ENCODE measurements at regions of chr5 and their contacts with region 1.

Region 1: DNA sequence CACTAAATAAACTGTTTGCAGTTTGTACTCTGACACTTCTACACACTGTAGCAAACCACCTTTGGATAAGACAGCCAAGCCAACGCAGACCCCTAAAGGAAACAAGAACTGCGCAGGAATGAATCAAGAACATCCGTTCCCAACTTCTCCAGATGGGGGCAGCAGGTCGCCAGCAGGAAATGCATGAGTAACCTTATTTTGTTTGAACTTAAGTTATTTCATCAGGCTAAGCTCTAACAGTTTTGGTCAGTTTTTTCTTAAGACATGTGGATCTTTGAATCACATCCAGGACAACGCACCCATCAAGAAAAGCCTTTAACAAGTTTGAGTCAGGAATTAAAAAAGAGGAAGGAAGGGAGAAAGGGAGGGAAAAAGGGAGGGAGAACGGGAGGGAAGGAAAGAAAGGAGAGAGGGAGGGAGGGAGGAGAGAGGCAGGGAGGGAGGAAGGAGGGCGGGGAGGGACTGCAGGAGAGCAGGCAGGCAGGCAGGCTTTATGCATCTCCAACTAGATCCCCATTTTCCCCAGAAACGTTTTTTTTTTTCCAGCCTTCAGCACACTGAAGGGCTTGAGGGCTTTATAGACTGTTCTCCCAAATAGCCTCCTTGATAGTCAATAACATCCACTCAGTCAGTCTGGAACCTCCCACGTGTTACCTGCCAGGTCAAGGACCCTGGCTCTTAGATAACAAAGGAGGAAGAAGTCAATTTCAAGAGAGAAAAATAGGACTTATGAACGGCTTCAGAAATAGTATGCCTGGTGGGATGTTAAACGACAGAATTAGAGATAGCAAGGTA is 22.2 kb downstream of the BHMT start:
- DNase-seq: peak; percentile 24
- ATAC-seq: peak; percentile 89
- H3K4me3 ChIP-seq: no peak overlapping the region
- H3K27ac ChIP-seq: no peak overlapping the region
- H3K4me1 ChIP-seq: peaks cover 17% of the 10 kb centered on the region
- H3K27me3 ChIP-seq: no peaks in the 10 kb centered on the region
- CTCF ChIP-seq: peak; percentile 70 to 83 (median 74)
- EP300 ChIP-seq: no peak
- POLR2A ChIP-seq: no peak
- RAD21 ChIP-seq: peak; percentile 93

Region 2: GRCh38 chr5:78467752-78468357 is 666.0 kb before region 1 on chr5:
- CTCF ChIA-PET with region 1: interaction called, 10 read pairs
- POLR2A ChIA-PET with region 1: no interaction called
- RAD21 ChIA-PET with region 1: interaction called, 7 read pairs
- SMC1A ChIA-PET with region 1: interaction called, 5 read pairs
- in situ Hi-C with region 1: no loop called
- intact Hi-C with region 1: loop called (anchors 10 kb)
- DNase-seq: peak; percentile 3
- ATAC-seq: peak; percentile 91
- H3K4me3 ChIP-seq: no peak overlapping the region
- H3K27ac ChIP-seq: no peak overlapping the region
- H3K4me1 ChIP-seq: no peaks in the 10 kb centered on the region
- H3K27me3 ChIP-seq: no peaks in the 10 kb centered on the region
- CTCF ChIP-seq: peak; percentile 55 to 76 (median 64)
- EP300 ChIP-seq: no peak
- POLR2A ChIP-seq: no peak
- RAD21 ChIP-seq: peak; percentile 76

Region 3: GRCh38 chr5:78964887-78965286 is 169.0 kb before region 1 on chr5:
- CTCF ChIA-PET with region 1: interaction called, 24 read pairs
- POLR2A ChIA-PET with region 1: interaction called, 4 read pairs
- RAD21 ChIA-PET with region 1: interaction called, 10 read pairs
- SMC1A ChIA-PET with region 1: interaction called, 5 read pairs
- in situ Hi-C with region 1: no loop called
- intact Hi-C with region 1: no loop called
- DNase-seq: no peak
- ATAC-seq: peak; percentile 88
- H3K4me3 ChIP-seq: no peak overlapping the region
- H3K27ac ChIP-seq: no peak overlapping the region
- H3K4me1 ChIP-seq: no peaks in the 10 kb centered on the region
- H3K27me3 ChIP-seq: no peaks in the 10 kb centered on the region
- CTCF ChIP-seq: peak; percentile 43 to 70 (median 45); a peak in 4 of 6 replicates
- EP300 ChIP-seq: no peak
- POLR2A ChIP-seq: no peak
- RAD21 ChIP-seq: peak; percentile 92

Region 4: GRCh38 chr5:79020861-79021561 is 112.8 kb before region 1 on chr5:
- CTCF ChIA-PET with region 1: interaction called, 658 read pairs
- POLR2A ChIA-PET with region 1: interaction called, 3 read pairs
- RAD21 ChIA-PET with region 1: interaction called, 326 read pairs
- SMC1A ChIA-PET with region 1: interaction called, 359 read pairs
- in situ Hi-C with region 1: loop called (anchors 5 kb)
- intact Hi-C with region 1: loop called (anchors 1 kb)
- DNase-seq: no peak
- ATAC-seq: peak; percentile 89
- H3K4me3 ChIP-seq: no peak overlapping the region
- H3K27ac ChIP-seq: no peak overlapping the region
- H3K4me1 ChIP-seq: no peaks in the 10 kb centered on the region
- H3K27me3 ChIP-seq: no peaks in the 10 kb centered on the region; a peak in 1 of 4 replicates
- CTCF ChIP-seq: peak; percentile 68 to 83 (median 78)
- EP300 ChIP-seq: no peak
- POLR2A ChIP-seq: no peak
- RAD21 ChIP-seq: peak; percentile 67

Region 5: GRCh38 chr5:79122973-79123372 is 10.9 kb before region 1 on chr5:
- CTCF ChIA-PET with region 1: interaction called, 34 read pairs
- POLR2A ChIA-PET with region 1: no interaction called
- RAD21 ChIA-PET with region 1: interaction called, 7 read pairs
- SMC1A ChIA-PET with region 1: interaction called, 4 read pairs
- in situ Hi-C with region 1: no loop called
- intact Hi-C with region 1: no loop called
- DNase-seq: no peak
- ATAC-seq: no peak
- H3K4me3 ChIP-seq: no peak overlapping the region
- H3K27ac ChIP-seq: no peak overlapping the region
- H3K4me1 ChIP-seq: no peaks in the 10 kb centered on the region
- H3K27me3 ChIP-seq: no peaks in the 10 kb centered on the region
- CTCF ChIP-seq: no peak
- EP300 ChIP-seq: no peak
- POLR2A ChIP-seq: no peak
- RAD21 ChIP-seq: no peak

Region 6: DNA sequence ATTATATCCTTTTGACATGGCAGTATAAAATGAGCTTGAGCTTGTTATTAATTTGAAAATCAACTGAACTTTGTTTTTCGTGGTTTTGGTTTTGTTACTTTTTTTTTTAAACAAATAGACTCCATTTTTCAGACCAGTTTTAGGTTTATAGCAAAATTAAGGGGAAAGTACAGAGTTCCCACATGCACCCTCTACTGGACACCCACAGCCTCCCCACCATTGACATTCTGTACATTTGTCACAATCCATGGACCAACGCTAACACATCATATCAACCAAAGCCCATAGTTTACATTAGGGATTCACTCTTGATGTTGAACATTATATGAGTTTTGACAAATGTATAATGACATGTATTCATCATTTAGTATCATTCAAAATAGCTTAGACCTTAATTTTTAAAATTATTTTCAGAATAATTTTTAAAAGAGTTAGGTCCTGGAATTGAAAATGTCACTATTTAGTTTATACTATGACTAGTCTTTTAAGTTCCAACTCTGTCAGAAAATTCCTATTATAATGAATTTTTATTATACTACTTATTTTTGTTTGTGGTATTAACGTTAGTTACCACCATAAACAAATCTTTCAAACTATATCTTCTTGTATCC is 66.8 kb after region 1 on chr5:
- CTCF ChIA-PET with region 1: interaction called, 18 read pairs
- POLR2A ChIA-PET with region 1: no interaction called
- RAD21 ChIA-PET with region 1: interaction called, 9 read pairs
- SMC1A ChIA-PET with region 1: interaction called, 9 read pairs
- in situ Hi-C with region 1: no loop called
- intact Hi-C with region 1: no loop called
- DNase-seq: no peak
- ATAC-seq: peak; percentile 94
- H3K4me3 ChIP-seq: no peak overlapping the region
- H3K27ac ChIP-seq: no peak overlapping the region
- H3K4me1 ChIP-seq: no peaks in the 10 kb centered on the region
- H3K27me3 ChIP-seq: no peaks in the 10 kb centered on the region
- CTCF ChIP-seq: peak; percentile 54 to 60 (median 58); a peak in 5 of 6 replicates
- EP300 ChIP-seq: no peak
- POLR2A ChIP-seq: no peak
- RAD21 ChIP-seq: 0 out of 2 replicates have a peak, but pooled peaks have one; percentile 9

Region 7: DNA sequence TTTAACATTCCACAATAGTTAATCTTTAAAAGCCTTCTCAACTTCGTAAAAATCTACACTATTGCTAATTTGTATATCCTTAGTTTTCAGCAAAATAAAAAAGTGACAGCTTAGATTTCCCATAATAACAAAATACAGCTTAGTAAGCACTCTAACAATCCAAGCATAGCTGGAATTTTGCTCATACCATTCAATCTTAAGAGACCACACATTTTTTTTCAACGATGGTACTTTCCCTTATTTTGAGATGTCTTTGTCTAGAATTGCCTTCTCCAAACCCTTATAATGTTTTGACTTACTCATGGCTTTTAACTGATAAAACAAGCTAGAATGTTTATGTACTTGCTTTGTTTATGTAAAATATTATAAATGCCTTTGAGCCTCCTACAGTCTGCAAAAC is 314.5 kb after region 1 on chr5:
- CTCF ChIA-PET with region 1: interaction called, 14 read pairs
- POLR2A ChIA-PET with region 1: no interaction called
- RAD21 ChIA-PET with region 1: interaction called, 6 read pairs
- SMC1A ChIA-PET with region 1: interaction called, 5 read pairs
- in situ Hi-C with region 1: no loop called
- intact Hi-C with region 1: no loop called
- DNase-seq: no peak
- ATAC-seq: no peak
- H3K4me3 ChIP-seq: no peak overlapping the region
- H3K27ac ChIP-seq: no peak overlapping the region
- H3K4me1 ChIP-seq: no peaks in the 10 kb centered on the region
- H3K27me3 ChIP-seq: no peaks in the 10 kb centered on the region
- CTCF ChIP-seq: no peak
- EP300 ChIP-seq: no peak
- POLR2A ChIP-seq: no peak
- RAD21 ChIP-seq: no peak